ENCODE measurements at regions of chr21 and their contacts with region 1.

Region 1: GRCh38 chr21:41446571-41446970 is 20.5 kb downstream of the MX1 start:
- DNase-seq: no peak
- H3K4me3 ChIP-seq: no peak overlapping the region
- H3K27ac ChIP-seq: no peak overlapping the region
- H3K4me1 ChIP-seq: no peaks in the 10 kb centered on the region
- H3K27me3 ChIP-seq: no peaks in the 10 kb centered on the region
- CTCF ChIP-seq: no peak
- EP300 ChIP-seq: no peak
- POLR2A ChIP-seq: no peak

Region 2: DNA sequence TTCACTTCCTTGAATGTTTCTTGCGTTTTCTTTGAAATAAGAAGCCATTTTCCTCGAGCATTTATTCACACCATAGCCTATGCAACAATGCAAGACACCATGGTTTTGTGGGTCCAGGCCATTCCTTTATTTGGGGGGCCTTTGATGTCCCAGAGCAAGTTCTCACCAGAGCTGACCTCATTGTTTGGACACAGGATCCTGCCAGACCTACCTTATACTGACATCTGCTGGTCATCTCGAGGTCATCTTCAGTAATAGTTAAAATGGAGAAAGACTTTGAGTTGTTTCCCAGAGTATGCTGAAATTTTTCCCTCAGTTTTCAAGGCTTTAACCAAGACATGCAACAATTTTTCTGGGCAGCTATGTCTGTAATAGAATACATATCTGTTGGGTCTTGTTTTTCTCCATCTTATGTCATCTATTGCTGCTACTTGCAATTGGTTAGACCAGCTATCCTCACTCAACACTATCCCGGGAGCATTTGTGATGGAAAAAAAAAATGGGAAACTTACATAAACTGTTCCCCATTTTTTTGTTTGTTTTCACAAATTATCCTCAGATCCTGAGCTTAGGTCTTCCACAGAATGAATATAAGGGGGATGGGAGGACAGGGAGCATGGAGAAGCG is 312.6 kb before region 1 on chr21:
- intact Hi-C with region 1: loop called (anchors 10 kb)
- DNase-seq: peak in 1 of 2 donors; percentile 70
- H3K4me3 ChIP-seq: no peak overlapping the region
- H3K27ac ChIP-seq: no peak overlapping the region
- H3K4me1 ChIP-seq: no peaks in the 10 kb centered on the region
- H3K27me3 ChIP-seq: peaks cover 0 to 18% (median 0%) of the 10 kb centered on the region in 3 donors
- CTCF ChIP-seq: peak in 1 of 7 experiments; percentile 33
- EP300 ChIP-seq: no peak
- POLR2A ChIP-seq: no peak

Region 3: GRCh38 chr21:41378879-41379278 is 67.7 kb before region 1 on chr21:
- intact Hi-C with region 1: no loop called
- DNase-seq: no peak
- H3K4me3 ChIP-seq: no peak overlapping the region
- H3K27ac ChIP-seq: no peak overlapping the region
- H3K4me1 ChIP-seq: no peaks in the 10 kb centered on the region
- H3K27me3 ChIP-seq: no peaks in the 10 kb centered on the region
- CTCF ChIP-seq: no peak
- EP300 ChIP-seq: no peak
- POLR2A ChIP-seq: no peak

Region 4: GRCh38 chr21:41671859-41672532 is 225.4 kb after region 1 on chr21:
- intact Hi-C with region 1: no loop called
- DNase-seq: no peak
- H3K4me3 ChIP-seq: no peak overlapping the region
- H3K27ac ChIP-seq: no peak overlapping the region
- H3K4me1 ChIP-seq: no peaks in the 10 kb centered on the region
- H3K27me3 ChIP-seq: peaks cover 0 to 20% (median 0%) of the 10 kb centered on the region in 3 donors
- CTCF ChIP-seq: no peak
- EP300 ChIP-seq: no peak
- POLR2A ChIP-seq: no peak

Region 5: GRCh38 chr21:41726945-41727783 is 280.6 kb after region 1 on chr21:
- intact Hi-C with region 1: no loop called
- DNase-seq: peak; percentile 62 to 80
- H3K4me3 ChIP-seq: no peak overlapping the region
- H3K27ac ChIP-seq: peak overlapping the region; percentile 27 to 77 (median 72)
- H3K4me1 ChIP-seq: peaks cover 14 to 35% (median 21%) of the 10 kb centered on the region in 4 donors
- H3K27me3 ChIP-seq: peaks cover 0 to 57% (median 8%) of the 10 kb centered on the region in 3 donors
- CTCF ChIP-seq: no peak
- EP300 ChIP-seq: no peak
- POLR2A ChIP-seq: no peak

Region 6: GRCh38 chr21:41816220-41817165 is 369.9 kb after region 1 on chr21:
- intact Hi-C with region 1: no loop called
- DNase-seq: peak; percentile 74 to 87
- H3K4me3 ChIP-seq: no peak overlapping the region
- H3K27ac ChIP-seq: no peak overlapping the region
- H3K4me1 ChIP-seq: peaks cover 4 to 9% (median 7%) of the 10 kb centered on the region in 4 donors
- H3K27me3 ChIP-seq: no peaks in the 10 kb centered on the region
- CTCF ChIP-seq: peak in 5 of 7 experiments; percentile 63 to 80 (median 71)
- EP300 ChIP-seq: no peak
- POLR2A ChIP-seq: no peak

Measured in stomach (tissue), 19 donors.